Activated naive CD4-positive, alpha-beta T cell treated with anti-CD3 and anti-CD28 coated beads for 36 hours (primary cell): ENCODE measurements at regions of chr5 and their contacts with region 1.

Region 1: DNA sequence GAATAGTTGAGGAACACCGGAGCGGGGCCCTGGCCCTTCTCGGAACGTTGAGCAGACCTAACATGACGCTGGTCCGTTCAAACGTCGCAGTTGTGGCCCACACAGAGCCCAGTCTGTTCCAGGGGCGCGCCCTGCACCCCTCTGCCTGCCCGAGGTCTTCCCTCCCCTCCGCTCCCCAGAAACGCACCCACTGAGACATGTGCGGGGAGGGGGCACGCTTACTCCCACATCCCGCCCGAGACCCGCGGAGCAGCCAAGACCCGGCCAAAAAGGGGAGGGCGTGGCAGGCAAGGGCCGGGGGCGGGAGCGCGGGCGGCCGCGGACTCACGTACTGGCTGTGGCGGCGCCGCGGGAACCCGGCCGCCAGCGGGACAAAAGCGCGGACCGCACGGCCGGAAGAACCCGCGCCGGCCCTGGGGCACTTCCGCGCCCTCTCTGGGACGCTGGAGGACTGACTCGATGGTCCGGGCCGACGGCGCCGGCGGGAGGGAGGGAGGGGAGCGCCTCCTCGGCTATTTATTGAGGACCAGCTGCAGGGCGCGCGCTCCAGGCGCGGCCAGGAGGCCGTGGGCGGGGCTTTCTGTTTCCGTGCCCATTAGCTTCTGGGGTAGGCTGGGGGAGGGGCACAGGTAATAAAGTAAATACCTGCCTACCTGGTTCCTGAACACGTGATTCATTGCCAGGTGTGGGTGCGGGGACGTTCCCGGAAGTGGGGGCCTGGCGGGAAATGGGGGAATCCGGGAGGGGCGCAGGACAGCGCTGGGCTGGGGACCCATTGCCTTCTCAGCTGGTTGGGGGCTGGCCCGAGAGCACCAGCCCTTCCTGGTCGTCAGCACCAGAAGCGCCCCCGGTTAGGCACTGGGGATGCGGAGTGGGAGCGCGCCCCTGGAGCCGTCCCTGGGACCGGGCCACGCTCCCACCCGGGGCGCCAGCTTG is at the start of gene ZFP62:
- DNase-seq: peak; percentile 86
- H3K4me3 Mint-ChIP-seq: peak within 1 kb of the TSS; percentile 95
- H3K27ac Mint-ChIP-seq: peak within 1 kb of the TSS; percentile 89
- H3K4me1 Mint-ChIP-seq: peaks cover 19% of the 10 kb centered on the region
- H3K27me3 Mint-ChIP-seq: no peaks in the 10 kb centered on the region
- total RNA-seq, gene ZFP62: 21.5 to 23.6 TPM

Region 2: DNA sequence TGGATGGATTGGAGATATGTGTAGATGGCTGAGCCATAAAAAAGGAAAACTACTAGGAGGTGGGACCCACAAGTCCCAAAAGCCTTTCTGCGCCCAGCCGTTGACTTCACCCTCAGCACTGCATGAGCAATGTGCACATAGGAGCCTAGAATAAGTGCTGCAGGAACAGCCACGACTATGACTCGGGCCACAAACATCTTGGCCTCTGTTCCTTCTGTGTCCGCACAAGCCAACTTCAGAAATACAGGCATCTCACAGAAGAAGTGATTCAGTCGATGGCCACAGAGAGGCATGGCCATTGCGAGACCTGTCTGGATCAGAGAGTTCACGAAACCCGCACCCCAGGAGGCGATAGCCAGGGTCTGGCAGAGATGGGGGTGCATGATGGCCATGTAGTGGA is 121.9 kb before region 1 on chr5:
- CTCF ChIA-PET with region 1: no interaction called
- intact Hi-C with region 1: no loop called
- DNase-seq: no peak
- H3K4me3 Mint-ChIP-seq: no peak overlapping the region
- H3K27ac Mint-ChIP-seq: no peak overlapping the region
- H3K4me1 Mint-ChIP-seq: no peaks in the 10 kb centered on the region
- H3K27me3 Mint-ChIP-seq: peaks cover 15% of the 10 kb centered on the region

Region 3: DNA sequence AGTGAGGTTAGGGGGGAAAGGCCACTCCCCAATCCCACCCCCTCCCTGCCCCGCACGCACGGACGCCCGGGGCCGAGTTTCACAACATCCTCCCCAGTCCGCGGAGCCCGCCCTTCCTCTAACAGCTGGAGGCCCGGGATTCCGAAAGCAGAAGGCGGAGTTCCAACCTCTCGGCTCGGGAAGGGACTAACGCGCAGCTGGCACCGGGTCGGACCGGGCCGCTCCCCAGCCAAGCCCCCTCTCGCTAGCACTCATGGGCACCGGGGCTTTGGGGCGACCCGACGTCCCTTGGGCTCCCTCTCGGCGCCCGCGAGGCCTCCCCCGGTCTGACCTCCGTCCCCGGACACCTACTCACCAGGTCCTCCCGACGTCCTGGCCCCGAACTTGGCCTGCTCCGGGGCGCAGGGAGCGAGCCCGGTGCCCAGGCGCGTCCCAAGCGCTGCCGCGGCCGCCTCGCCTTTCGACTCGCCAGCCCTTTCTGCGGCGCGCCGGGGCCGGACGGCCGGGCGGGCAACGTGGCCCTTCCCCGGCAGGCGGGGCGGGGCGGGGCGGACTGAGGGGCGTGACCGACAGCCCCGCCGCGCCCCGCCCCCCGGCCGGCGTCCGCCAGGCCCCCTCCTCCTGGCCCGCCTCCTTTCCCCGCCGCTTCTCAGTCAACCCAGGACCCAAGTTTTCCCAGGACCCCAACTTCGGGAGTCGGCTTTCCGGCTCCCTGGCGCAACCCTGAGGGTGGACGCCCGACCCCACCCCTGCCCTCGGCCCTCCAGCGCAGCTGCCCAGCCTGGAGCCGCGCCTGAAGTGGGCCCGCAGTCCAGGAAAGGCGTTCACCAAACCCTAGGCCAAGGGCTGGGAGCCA is 58.6 kb before region 1 on chr5 and contains the start of gene MGAT1:
- CTCF ChIA-PET with region 1: interaction called, 4 read pairs
- intact Hi-C with region 1: loop called (anchors 1 kb)
- DNase-seq: peak; percentile 78
- H3K4me3 Mint-ChIP-seq: peak within 1 kb of the TSS; percentile 98
- H3K27ac Mint-ChIP-seq: peak within 1 kb of the TSS; percentile 99
- H3K4me1 Mint-ChIP-seq: peaks cover 77% of the 10 kb centered on the region
- H3K27me3 Mint-ChIP-seq: no peaks in the 10 kb centered on the region
- total RNA-seq, gene MGAT1: 70.0 to 75.2 TPM

Region 4: GRCh38 chr5:180831139-180832048 is 29.8 kb before region 1 on chr5:
- CTCF ChIA-PET with region 1: interaction called, 4 read pairs
- intact Hi-C with region 1: loop called (anchors 1 kb)
- DNase-seq: peak; percentile 84
- H3K4me3 Mint-ChIP-seq: peak overlapping the region; percentile 96
- H3K27ac Mint-ChIP-seq: peak overlapping the region; percentile 98
- H3K4me1 Mint-ChIP-seq: peaks cover 36% of the 10 kb centered on the region
- H3K27me3 Mint-ChIP-seq: no peaks in the 10 kb centered on the region

Region 5: DNA sequence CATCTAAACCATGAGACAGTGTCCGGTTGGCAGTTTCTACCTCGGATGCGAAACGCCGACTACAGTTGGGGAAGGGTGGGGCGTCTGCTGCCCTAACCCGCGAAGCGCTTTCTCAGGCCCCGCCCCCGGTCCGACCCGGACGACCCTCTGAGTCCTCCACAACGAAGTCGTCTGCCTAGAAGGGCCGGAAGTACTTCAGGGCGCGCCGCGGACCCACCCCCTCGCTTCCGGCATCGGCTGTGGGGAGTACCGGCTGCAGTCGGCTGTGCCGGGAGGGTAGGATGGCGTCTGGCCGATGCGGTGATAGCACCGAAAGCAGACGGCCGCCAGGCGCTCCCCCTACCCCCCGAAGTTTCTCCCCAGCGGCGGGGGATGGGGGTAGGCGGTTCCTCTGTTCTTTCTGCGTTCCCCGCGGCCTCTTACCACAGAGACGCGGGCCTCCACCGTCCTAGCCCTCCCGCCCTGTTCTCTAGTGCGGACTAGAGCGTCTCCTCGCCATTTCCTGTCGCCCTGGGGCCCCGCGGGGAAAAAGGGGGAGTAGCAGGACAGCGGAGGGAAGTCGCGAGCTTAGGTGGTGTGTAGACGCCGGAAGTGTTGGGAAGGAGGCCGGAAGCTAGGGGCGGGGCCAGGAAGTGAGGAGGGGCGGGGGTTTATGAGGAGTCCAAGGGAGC is 362.0 kb after region 1 on chr5 and contains the start of gene TRIM41:
- CTCF ChIA-PET with region 1: no interaction called
- intact Hi-C with region 1: loop called (anchors 1 kb)
- DNase-seq: peak; percentile 97
- H3K4me3 Mint-ChIP-seq: peak within 1 kb of the TSS; percentile 96
- H3K27ac Mint-ChIP-seq: peak within 1 kb of the TSS; percentile 100
- H3K4me1 Mint-ChIP-seq: peaks cover 55% of the 10 kb centered on the region
- H3K27me3 Mint-ChIP-seq: peaks cover 6% of the 10 kb centered on the region
- total RNA-seq, gene TRIM41: 36.5 to 37.3 TPM